ENCODE measurements at regions of chr1 and their contacts with region 1.

Region 1: GRCh38 chr1:46581681-46582455 is 22.2 kb downstream of the MKNK1 start:
- DNase-seq: peak; percentile 32
- H3K4me3 Mint-ChIP-seq: peak overlapping the region; percentile 60
- H3K27ac Mint-ChIP-seq: peak overlapping the region; percentile 94
- H3K4me1 Mint-ChIP-seq: peaks cover 49% of the 10 kb centered on the region
- H3K27me3 Mint-ChIP-seq: no peaks in the 10 kb centered on the region

Region 2: DNA sequence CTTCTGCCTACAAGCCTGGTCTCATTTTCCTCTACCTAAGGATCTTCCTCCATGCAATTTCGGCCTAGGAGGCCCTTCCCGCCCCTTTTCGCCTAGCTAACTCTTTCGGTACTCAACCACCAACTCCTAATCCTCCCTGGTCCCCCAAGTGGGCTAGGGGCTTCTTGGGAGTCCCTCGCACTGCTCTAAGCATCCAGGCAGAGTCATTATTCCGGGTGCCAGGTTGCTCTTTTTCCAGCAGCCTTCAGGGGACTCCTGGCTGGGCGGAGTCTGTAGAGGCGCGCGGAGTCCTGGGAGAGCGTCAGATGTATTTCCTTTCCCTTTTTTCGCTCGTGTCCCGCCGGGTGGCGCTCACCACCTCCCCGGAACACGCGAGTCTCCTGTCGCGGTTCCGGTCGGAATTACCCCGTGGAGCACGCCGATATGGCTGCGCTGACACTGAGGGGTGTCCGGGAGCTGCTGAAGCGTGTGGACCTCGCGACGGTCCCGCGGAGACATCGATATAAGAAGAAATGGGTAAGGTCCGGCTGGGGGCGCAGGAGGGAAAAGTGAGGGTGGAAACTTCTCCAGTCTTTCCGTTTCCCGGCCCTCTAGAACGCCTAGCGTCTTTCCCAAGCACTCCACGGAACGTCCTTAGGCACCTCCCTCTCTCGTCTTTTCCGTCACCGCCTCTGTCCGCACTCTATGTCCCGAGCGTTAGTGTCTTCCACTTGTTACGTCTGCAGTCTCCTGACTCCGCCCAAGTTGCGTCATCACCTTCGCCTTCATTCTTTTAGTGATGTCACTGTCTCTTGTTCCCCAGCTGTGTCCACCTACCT is 241.3 kb before region 1 on chr1 and contains the start of gene NSUN4:
- intact Hi-C with region 1: loop called (anchors 10 kb)
- DNase-seq: peak; percentile 81
- H3K4me3 Mint-ChIP-seq: peak within 1 kb of the TSS; percentile 100
- H3K27ac Mint-ChIP-seq: peak within 1 kb of the TSS; percentile 99
- H3K4me1 Mint-ChIP-seq: peaks cover 32% of the 10 kb centered on the region
- H3K27me3 Mint-ChIP-seq: no peaks in the 10 kb centered on the region
- total RNA-seq, gene NSUN4: 37.2 and 37.6 TPM in 2 replicates

Region 3: GRCh38 chr1:46603858-46604549 is 22.1 kb after region 1 on chr1 and contains the start of gene MKNK1:
- intact Hi-C with region 1: loop called (anchors 1 kb)
- DNase-seq: peak; percentile 97
- H3K4me3 Mint-ChIP-seq: peak within 1 kb of the TSS; percentile 87
- H3K27ac Mint-ChIP-seq: peak within 1 kb of the TSS; percentile 75
- H3K4me1 Mint-ChIP-seq: peaks cover 54% of the 10 kb centered on the region
- H3K27me3 Mint-ChIP-seq: no peaks in the 10 kb centered on the region
- total RNA-seq, gene MKNK1: 45.2 and 48.1 TPM in 2 replicates

Region 4: GRCh38 chr1:46616277-46617107 is 34.6 kb after region 1 on chr1 and contains the start of gene MOB3C:
- intact Hi-C with region 1: loop called (anchors 1 kb)
- DNase-seq: peak; percentile 54
- H3K4me3 Mint-ChIP-seq: peak within 1 kb of the TSS; percentile 87
- H3K27ac Mint-ChIP-seq: peak within 1 kb of the TSS; percentile 92
- H3K4me1 Mint-ChIP-seq: peaks cover 69% of the 10 kb centered on the region
- H3K27me3 Mint-ChIP-seq: no peaks in the 10 kb centered on the region
- total RNA-seq, gene MOB3C: 16.0 and 17.5 TPM in 2 replicates

Region 5: GRCh38 chr1:46653405-46653958 is 71.6 kb after region 1 on chr1:
- intact Hi-C with region 1: loop called (anchors 2 kb)
- DNase-seq: no peak
- H3K4me3 Mint-ChIP-seq: no peak overlapping the region
- H3K27ac Mint-ChIP-seq: peak overlapping the region; percentile 70
- H3K4me1 Mint-ChIP-seq: peaks cover 25% of the 10 kb centered on the region
- H3K27me3 Mint-ChIP-seq: no peaks in the 10 kb centered on the region